WTC11 (cell line): ENCODE measurements at regions of chr10 and their contacts with region 1.

Region 1: GRCh38 chr10:102641880-102642735 is 2.2 kb upstream of the TRIM8 start:
- DNase-seq: peak; percentile 99
- ATAC-seq: peak; percentile 86
- H3K4me3 Mint-ChIP-seq: peak overlapping the region; percentile 85
- H3K27ac Mint-ChIP-seq: peak overlapping the region; percentile 99
- H3K4me1 Mint-ChIP-seq: peaks cover 21% of the 10 kb centered on the region
- H3K27me3 Mint-ChIP-seq: peaks cover 4% of the 10 kb centered on the region; the same call in 1 of the 2 replicates
- CTCF ChIP-seq: no peak

Region 2: GRCh38 chr10:102555781-102556328 is 86.3 kb before region 1 on chr10:
- CTCF ChIA-PET with region 1: no interaction called
- POLR2A ChIA-PET with region 1: no interaction called
- DNase-seq: no peak
- ATAC-seq: no peak
- H3K4me3 Mint-ChIP-seq: no peak overlapping the region
- H3K27ac Mint-ChIP-seq: no peak overlapping the region
- H3K4me1 Mint-ChIP-seq: no peaks in the 10 kb centered on the region
- H3K27me3 Mint-ChIP-seq: peaks cover 3% of the 10 kb centered on the region
- CTCF ChIP-seq: no peak

Region 3: GRCh38 chr10:102615361-102615760 is 26.7 kb before region 1 on chr10:
- CTCF ChIA-PET with region 1: interaction called, 29 read pairs
- POLR2A ChIA-PET with region 1: interaction called, 3 read pairs
- DNase-seq: peak; percentile 77
- ATAC-seq: peak; percentile 86
- H3K4me3 Mint-ChIP-seq: no peak overlapping the region
- H3K27ac Mint-ChIP-seq: no peak overlapping the region
- H3K4me1 Mint-ChIP-seq: peaks cover 8% of the 10 kb centered on the region
- H3K27me3 Mint-ChIP-seq: no peaks in the 10 kb centered on the region
- CTCF ChIP-seq: peak; percentile 43

Region 4: GRCh38 chr10:102629661-102630614 is 12.2 kb before region 1 on chr10:
- CTCF ChIA-PET with region 1: interaction called, 45 read pairs
- POLR2A ChIA-PET with region 1: interaction called, 22 read pairs
- DNase-seq: peak; percentile 67
- ATAC-seq: peak; percentile 74
- H3K4me3 Mint-ChIP-seq: no peak overlapping the region; the same call in 1 of the 2 replicates
- H3K27ac Mint-ChIP-seq: peak overlapping the region; percentile 90
- H3K4me1 Mint-ChIP-seq: peaks cover 85% of the 10 kb centered on the region
- H3K27me3 Mint-ChIP-seq: no peaks in the 10 kb centered on the region; the same call in 1 of the 2 replicates
- CTCF ChIP-seq: no peak

Region 5: GRCh38 chr10:102660888-102661657 is 19.0 kb after region 1 on chr10:
- CTCF ChIA-PET with region 1: interaction called, 16 read pairs
- POLR2A ChIA-PET with region 1: no interaction called
- DNase-seq: no peak
- ATAC-seq: peak; percentile 55
- H3K4me3 Mint-ChIP-seq: no peak overlapping the region
- H3K27ac Mint-ChIP-seq: no peak overlapping the region
- H3K4me1 Mint-ChIP-seq: peaks cover 10% of the 10 kb centered on the region
- H3K27me3 Mint-ChIP-seq: no peaks in the 10 kb centered on the region; the same call in 1 of the 2 replicates
- CTCF ChIP-seq: no peak

Region 6: DNA sequence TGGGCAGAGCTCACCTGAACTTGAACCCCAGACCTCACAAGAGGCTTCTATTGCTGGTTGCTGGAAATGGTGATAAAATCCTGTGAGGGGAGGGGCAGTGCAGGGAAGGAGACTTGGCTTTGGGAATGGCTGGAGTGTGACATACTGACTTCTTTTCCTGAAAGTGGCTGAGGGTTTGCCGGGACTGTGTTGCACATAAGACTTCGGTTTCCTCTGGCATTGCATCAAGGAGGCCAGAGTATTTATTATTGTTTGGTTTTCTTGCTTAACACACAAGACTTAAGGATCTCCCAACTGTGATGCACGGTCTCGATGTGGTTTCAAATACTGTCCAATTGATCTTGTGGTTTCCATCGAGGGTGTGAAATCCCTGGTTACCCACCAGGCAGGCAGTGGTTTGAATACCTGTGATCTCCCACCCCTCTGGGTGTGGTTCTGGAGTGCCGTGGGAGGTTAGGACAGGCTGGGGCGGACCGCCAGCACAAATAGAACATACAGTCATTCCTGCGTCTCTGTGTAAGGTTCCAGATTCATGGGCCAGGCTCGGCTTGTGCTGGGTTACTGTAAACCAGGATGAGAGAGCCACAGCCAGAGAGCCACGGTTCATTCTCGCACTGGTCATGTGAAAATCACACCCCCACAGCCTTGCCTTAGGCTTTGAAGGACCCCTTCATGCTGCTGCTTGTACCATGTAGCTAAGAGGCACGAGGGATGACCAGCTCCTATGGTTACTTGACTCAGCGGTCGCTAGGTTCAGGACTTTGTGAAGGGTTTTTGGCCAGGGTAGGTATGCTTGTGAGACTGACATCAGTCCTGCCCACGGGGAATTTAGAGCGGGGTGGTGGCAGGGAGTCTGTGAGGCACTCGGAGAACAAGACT is 140.8 kb after region 1 on chr10:
- CTCF ChIA-PET with region 1: no interaction called
- POLR2A ChIA-PET with region 1: no interaction called
- DNase-seq: no peak
- ATAC-seq: no peak
- H3K4me3 Mint-ChIP-seq: no peak overlapping the region
- H3K27ac Mint-ChIP-seq: peak overlapping the region; percentile 52; the same call in 1 of the 2 replicates
- H3K4me1 Mint-ChIP-seq: peaks cover 51% of the 10 kb centered on the region
- H3K27me3 Mint-ChIP-seq: no peaks in the 10 kb centered on the region
- CTCF ChIP-seq: no peak

Region 7: DNA sequence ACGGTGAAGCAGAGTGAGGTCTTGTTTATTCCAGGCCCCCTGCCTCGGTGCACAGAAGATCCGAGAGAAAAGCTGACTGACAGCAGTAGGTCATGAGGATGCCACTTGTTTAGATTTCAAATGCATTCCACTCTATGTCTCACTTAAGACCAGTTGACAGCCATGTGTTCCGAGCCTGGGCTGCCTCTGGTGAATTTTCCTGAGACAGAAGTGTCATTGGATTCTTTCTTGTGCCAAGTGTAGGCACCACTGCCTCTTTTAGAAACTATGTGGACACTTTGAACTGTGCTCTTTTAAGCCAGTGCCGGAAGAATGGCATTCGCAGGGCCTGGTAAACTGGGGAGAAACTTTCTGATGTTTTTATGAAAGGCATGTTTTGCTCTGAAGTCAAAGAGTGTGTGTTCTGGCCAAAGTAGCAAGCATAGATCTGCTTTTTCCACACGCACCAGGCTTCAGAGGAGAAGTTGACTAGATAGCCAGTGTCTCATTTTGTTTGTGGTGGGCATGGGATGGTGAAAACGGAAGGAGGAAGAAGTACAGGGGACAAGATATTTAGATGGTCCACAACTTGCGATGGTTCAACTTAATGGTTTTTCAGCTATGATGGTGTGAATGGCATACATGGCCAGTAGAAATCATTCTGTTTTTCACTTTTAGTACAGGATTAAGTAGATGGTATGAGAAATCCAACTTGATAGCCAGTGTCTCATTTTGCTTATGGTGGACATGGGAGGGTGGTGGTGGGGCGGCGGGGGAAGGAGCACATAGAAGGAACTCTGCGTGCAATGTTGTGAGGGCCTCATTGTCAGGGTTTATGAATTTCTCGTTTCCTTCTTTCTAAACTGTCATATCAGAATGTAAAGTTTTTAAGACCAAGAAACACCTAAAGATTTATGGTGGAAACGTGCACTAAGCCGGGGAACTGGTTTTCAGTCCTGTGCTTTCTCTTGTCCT is 153.6 kb after region 1 on chr10:
- CTCF ChIA-PET with region 1: no interaction called
- POLR2A ChIA-PET with region 1: no interaction called
- DNase-seq: no peak
- ATAC-seq: no peak
- H3K4me3 Mint-ChIP-seq: no peak overlapping the region
- H3K27ac Mint-ChIP-seq: no peak overlapping the region; the same call in 1 of the 2 replicates
- H3K4me1 Mint-ChIP-seq: peaks cover 39% of the 10 kb centered on the region
- H3K27me3 Mint-ChIP-seq: no peaks in the 10 kb centered on the region
- CTCF ChIP-seq: no peak